IMR-90 (cell line): ENCODE measurements at regions of chr17 and their contacts with region 1.

Region 1: DNA sequence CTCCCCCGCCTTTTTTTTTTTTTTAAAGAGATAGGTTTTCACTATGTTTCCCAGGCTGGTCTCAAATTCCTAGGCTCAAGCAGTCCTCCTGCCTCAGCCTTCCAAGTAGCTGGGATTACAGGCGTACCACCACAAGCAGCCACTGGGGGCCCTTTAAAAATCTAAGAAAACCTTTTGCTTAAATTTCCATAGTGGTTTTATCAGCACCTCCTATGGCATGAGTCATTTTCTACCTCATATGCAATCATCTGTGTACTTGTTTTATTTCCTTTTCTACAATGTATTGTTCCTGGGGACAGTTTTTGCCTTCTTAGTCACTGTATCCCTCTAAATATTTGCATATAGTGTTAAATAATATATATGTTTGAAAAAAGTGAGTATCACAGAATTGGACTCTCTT is 29.2 kb downstream of the GNA13 start:
- DNase-seq: peak; percentile 83
- ATAC-seq: peak; percentile 75
- H3K4me3 ChIP-seq: no peak overlapping the region
- H3K27ac ChIP-seq: no peak overlapping the region
- H3K4me1 ChIP-seq: peaks cover 12% of the 10 kb centered on the region
- H3K27me3 ChIP-seq: no peaks in the 10 kb centered on the region
- CTCF ChIP-seq: peak; percentile 47
- POLR2A ChIP-seq: no peak
- RAD21 ChIP-seq: peak; percentile 41

Region 2: GRCh38 chr17:64773836-64774761 is 253.2 kb before region 1 on chr17:
- CTCF ChIA-PET with region 1: no interaction called
- POLR2A ChIA-PET with region 1: no interaction called
- dilution Hi-C with region 1: no loop called
- in situ Hi-C with region 1: no loop called
- intact Hi-C with region 1: no loop called
- DNase-seq: peak; percentile 75
- ATAC-seq: peak; percentile 67
- H3K4me3 ChIP-seq: no peak overlapping the region
- H3K27ac ChIP-seq: no peak overlapping the region; the same call in 1 of the 2 replicates
- H3K4me1 ChIP-seq: peaks cover 11% of the 10 kb centered on the region
- H3K27me3 ChIP-seq: no peaks in the 10 kb centered on the region
- CTCF ChIP-seq: peak; percentile 58
- POLR2A ChIP-seq: no peak
- RAD21 ChIP-seq: peak; percentile 77

Region 3: DNA sequence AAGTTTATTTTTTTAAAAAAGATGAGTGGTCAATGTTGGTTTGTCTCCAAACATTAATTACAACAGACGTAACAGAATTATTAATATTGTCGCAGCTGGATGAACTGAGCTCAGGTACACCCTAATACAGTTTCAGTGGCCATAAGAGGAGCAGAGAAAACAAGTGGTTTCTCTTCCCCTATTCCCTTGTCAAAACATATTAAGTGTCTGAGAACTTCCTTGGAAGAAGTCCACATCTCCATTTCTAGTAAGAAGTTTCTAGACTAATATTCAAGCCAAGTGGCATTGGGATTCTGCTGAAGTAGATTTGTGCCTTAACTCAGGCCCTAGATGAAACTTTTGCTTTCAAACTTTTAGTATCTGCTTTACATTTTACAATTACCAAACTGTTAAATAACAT is 18.4 kb before region 1 on chr17:
- CTCF ChIA-PET with region 1: no interaction called
- POLR2A ChIA-PET with region 1: no interaction called
- dilution Hi-C with region 1: no loop called
- in situ Hi-C with region 1: no loop called
- intact Hi-C with region 1: no loop called
- DNase-seq: no peak
- ATAC-seq: no peak
- H3K4me3 ChIP-seq: no peak overlapping the region
- H3K27ac ChIP-seq: no peak overlapping the region
- H3K4me1 ChIP-seq: peaks cover 4% of the 10 kb centered on the region; the same call in 1 of the 2 replicates
- H3K27me3 ChIP-seq: no peaks in the 10 kb centered on the region
- CTCF ChIP-seq: no peak
- POLR2A ChIP-seq: no peak
- RAD21 ChIP-seq: no peak

Region 4: DNA sequence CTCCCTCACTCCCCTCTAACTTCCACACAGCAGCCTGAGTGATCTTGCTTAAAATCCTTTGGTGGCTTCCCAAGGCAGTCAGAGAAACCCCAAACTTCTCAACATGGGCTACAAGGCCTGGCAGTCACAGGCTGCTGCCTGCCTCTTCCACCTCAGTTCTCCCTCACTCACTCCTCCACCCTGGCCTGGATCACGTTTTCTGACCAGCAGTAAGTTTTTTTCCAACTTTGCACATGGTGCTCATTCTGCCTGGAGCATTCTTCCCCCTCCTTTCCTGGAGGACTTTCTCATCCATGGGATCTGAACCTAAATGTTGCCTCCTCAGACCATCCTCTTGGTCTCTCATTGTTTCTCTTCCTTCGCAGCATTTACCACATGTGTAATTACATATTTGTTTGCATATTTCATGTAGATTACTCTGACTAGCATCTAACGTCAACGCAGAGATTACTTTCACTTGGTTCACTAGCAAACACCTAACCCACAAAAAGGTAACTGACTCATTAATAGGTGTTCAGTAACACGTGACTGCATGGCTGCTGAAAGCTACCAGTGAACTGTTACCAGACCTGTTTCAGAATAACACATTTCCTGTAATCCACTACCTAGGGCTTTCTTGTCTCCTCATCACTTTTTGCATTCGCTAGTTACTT is 12.2 kb after region 1 on chr17:
- CTCF ChIA-PET with region 1: no interaction called
- POLR2A ChIA-PET with region 1: interaction called, 20 read pairs
- dilution Hi-C with region 1: no loop called
- in situ Hi-C with region 1: no loop called
- intact Hi-C with region 1: no loop called
- DNase-seq: no peak
- ATAC-seq: no peak
- H3K4me3 ChIP-seq: no peak overlapping the region
- H3K27ac ChIP-seq: no peak overlapping the region
- H3K4me1 ChIP-seq: peaks cover 12% of the 10 kb centered on the region
- H3K27me3 ChIP-seq: no peaks in the 10 kb centered on the region
- CTCF ChIP-seq: no peak
- POLR2A ChIP-seq: no peak
- RAD21 ChIP-seq: no peak

Region 5: GRCh38 chr17:65074778-65075250 is 47.5 kb after region 1 on chr17:
- CTCF ChIA-PET with region 1: no interaction called
- POLR2A ChIA-PET with region 1: no interaction called
- dilution Hi-C with region 1: no loop called
- in situ Hi-C with region 1: no loop called
- intact Hi-C with region 1: loop called (anchors 2 kb)
- DNase-seq: peak; percentile 68
- ATAC-seq: peak; percentile 91
- H3K4me3 ChIP-seq: no peak overlapping the region
- H3K27ac ChIP-seq: peak overlapping the region; percentile 48; the same call in 1 of the 2 replicates
- H3K4me1 ChIP-seq: peaks cover 14% of the 10 kb centered on the region
- H3K27me3 ChIP-seq: no peaks in the 10 kb centered on the region
- CTCF ChIP-seq: no peak
- POLR2A ChIP-seq: no peak
- RAD21 ChIP-seq: peak; percentile 18; the same call in 1 of the 2 replicates